ENCODE measurements at regions of chr17 and their contacts with region 1.

Region 1: GRCh38 chr17:39621523-39622379 is 5.0 kb upstream of the PPP1R1B start:
- DNase-seq: peak; percentile 80
- H3K27ac ChIP-seq: peak overlapping the region; percentile 23
- CTCF ChIP-seq: peak; percentile 98

Region 2: GRCh38 chr17:39547713-39548478 is 73.9 kb before region 1 on chr17:
- CTCF ChIA-PET with region 1: interaction called, 15 read pairs
- POLR2A ChIA-PET with region 1: no interaction called
- DNase-seq: peak; percentile 60
- H3K27ac ChIP-seq: no peak overlapping the region
- CTCF ChIP-seq: peak; percentile 94

Region 3: DNA sequence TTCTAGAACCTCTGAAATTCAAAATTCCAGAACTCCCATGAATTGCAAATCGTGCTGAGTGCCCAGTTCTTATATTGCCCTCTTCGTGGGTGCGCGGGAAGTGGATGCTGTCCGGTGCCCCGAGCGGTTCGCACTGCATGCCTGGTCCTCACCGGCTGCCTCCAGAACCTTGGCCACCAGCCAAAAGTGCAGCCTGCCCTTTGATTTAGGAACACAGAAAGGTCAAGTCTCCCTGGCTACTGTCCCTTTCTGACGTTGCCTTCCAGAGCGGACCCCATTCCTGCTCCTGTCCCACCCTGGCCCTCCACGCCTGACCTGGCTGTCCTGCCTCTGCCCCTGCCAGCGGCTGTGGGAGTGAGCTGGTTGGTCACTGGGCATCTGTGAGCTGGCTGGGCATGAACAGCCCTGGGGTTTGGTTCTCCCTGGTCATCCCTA is 23.7 kb before region 1 on chr17:
- CTCF ChIA-PET with region 1: interaction called, 22 read pairs
- POLR2A ChIA-PET with region 1: no interaction called
- DNase-seq: no peak
- H3K27ac ChIP-seq: no peak overlapping the region
- CTCF ChIP-seq: no peak

Region 4: DNA sequence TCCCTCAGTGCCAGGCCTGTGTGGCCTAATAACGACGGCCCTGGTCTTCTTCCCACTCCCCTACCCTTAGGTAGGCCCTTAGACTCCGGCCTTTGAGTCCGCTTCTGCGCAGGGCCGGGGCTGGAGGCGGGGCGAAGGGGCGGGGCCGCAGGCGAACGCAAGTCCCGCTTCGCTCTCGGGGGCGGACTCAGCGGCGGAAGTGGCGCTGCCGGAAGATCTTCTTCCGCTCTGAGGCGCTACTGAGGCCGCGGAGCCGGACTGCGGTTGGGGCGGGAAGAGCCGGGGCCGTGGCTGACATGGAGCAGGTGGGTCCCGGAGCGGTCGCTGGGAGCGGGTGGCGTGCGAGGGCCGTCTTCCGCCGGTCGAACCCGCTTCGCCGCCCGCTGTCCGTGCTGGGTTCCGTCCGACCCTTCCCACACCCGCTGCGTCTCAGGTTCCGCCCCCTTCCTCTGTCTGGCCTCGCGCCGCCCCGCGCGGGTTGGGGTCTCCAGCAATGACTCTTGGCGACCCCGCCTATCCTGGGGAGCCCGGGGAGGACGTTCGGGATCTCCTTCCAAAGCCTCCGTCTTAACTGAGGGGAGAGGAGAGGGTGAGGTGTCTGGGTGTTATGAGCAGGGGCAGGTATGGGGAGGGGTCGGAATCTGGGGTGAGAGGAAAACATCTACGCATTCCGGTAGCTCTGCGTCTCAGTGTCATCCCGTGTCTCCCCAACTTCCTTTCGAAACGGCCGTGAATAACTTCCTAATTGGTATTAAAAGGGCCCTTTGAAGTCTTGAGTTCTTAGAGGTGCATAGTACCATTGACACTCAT is 15.4 kb after region 1 on chr17 and contains the start of gene STARD3:
- CTCF ChIA-PET with region 1: interaction called, 66 read pairs
- POLR2A ChIA-PET with region 1: no interaction called
- DNase-seq: peak; percentile 84
- H3K27ac ChIP-seq: peak within 1 kb of the TSS; percentile 80
- CTCF ChIP-seq: no peak

Region 5: GRCh38 chr17:39643271-39643670 is 21.5 kb after region 1 on chr17:
- CTCF ChIA-PET with region 1: interaction called, 23 read pairs
- POLR2A ChIA-PET with region 1: no interaction called
- DNase-seq: no peak
- H3K27ac ChIP-seq: peak overlapping the region; percentile 11; the same call in 1 of the 2 replicates
- CTCF ChIP-seq: no peak

Region 6: DNA sequence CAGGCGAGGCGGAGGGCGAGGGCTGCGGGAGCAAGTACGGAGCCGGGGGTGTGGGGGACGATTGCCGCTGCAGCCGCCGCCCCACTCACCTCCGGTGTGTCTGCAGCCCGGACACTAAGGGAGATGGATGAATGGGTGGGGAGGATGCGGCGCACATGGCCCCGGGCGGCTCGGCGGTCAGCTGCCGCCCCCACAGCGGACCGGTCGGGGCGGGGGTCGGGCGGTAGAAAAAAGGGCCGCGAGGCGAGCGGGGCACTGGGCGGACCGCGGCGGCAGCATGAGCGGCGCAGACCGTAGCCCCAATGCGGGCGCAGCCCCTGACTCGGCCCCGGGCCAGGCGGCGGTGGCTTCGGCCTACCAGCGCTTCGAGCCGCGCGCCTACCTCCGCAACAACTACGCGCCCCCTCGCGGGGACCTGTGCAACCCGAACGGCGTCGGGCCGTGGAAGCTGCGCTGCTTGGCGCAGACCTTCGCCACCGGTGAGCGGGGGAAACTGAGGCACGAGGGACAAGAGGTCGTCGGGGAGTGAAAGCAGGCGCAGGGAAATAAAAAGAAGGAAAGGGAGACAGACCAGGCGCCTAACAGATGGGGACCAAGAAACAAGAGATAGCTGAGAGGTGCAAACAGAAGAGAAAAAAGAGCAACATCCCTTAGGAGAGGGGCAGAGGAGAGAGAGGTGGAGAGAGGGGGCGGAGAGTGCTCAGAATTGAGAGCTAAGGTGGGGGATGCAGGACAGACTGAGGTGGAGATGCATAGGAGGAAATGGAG is 46.6 kb after region 1 on chr17 and contains the start of gene PNMT:
- CTCF ChIA-PET with region 1: interaction called, 12 read pairs
- POLR2A ChIA-PET with region 1: no interaction called
- DNase-seq: peak; percentile 41
- H3K27ac ChIP-seq: no peak within 1 kb of the TSS
- CTCF ChIP-seq: peak; percentile 75

Region 7: DNA sequence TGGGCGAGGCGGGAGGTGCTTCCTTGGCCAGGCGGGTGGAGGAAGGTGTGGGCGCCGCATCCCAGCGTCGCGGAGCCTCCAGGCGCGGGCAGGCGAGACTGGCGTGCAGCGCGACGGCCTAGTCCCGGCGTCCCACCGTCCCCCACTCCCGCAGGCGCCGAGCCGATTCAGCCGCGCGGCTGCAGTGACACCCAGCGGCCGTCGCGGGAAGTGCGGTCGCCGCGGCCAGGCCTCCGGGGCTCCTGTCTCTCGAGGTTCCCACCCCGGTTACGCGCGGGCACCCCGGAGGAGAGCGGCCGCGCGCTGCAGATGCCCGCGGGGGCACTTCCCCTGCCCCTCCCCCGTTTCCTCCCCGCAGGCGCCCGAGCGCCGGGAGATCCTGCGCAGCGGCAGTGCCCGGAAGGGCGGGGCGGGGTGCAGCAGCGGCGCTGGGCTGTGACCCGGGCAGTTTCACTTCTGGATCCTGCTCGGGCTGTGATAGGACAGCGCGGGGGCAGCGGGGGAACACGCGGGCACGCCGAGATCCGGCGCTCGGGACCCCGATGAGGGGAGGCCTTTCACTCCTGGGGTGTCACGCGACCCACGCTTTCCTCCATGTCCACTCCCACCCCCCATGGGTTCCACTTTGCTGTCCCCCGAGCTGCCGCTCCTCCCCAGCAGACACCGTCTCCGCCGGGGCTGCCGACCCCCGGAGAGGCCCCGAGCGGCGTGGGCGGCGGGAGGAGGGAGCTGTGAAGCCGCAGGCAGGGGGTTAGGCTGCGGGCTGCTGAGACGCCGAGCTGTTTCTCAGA is 132.6 kb after region 1 on chr17:
- CTCF ChIA-PET with region 1: interaction called, 21 read pairs
- POLR2A ChIA-PET with region 1: no interaction called
- DNase-seq: peak; percentile 92
- H3K27ac ChIP-seq: peak overlapping the region; percentile 90
- CTCF ChIP-seq: peak; percentile 97

Region 8: GRCh38 chr17:39935899-39936298 is 314.1 kb after region 1 on chr17:
- CTCF ChIA-PET with region 1: no interaction called
- POLR2A ChIA-PET with region 1: no interaction called
- DNase-seq: no peak
- H3K27ac ChIP-seq: no peak overlapping the region
- CTCF ChIP-seq: no peak

Measured in RWPE1 (cell line).